GM12878 (cell line): ENCODE measurements at regions of chr13 and their contacts with region 1.

Region 1: DNA sequence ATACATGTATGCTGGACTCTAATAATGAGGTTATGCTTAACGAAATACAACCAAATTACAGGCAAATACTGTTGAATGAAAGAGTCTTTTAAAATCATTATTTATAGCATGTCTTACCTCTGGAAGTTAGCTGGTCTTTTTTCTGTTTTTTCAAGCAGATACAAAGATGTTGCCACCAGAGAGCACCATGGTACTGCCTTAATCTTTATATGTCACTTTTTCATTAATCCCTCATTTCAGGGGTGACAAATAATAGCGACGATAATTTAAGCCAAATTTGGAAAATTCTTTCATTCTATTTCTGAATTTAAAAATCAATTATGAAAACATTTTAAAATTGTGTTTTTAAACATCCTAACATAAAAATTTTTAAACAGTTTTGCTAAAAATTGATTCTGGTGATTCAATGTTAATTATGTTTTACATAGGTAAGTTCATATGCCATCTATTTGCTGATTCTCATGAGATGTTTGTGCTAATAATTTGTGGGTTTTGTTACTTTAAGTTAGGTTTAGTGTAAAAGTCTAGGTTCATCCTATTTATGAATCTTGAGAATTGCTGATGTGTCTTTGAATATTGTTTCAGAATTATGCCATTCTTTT is 379.3 kb upstream of the SGCG start:
- DNase-seq: no peak
- ATAC-seq: peak; percentile 39
- H3K4me3 ChIP-seq: no peak overlapping the region
- H3K27ac ChIP-seq: no peak overlapping the region
- H3K4me1 ChIP-seq: no peaks in the 10 kb centered on the region
- H3K27me3 ChIP-seq: no peaks in the 10 kb centered on the region
- CTCF ChIP-seq: peak; percentile 20 to 61 (median 24); a peak in 4 of 6 replicates
- EP300 ChIP-seq: no peak
- POLR2A ChIP-seq: no peak
- RAD21 ChIP-seq: peak; percentile 79

Region 2: GRCh38 chr13:21638319-21639282 is 1162.9 kb before region 1 on chr13:
- CTCF ChIA-PET with region 1: interaction called, 28 read pairs
- POLR2A ChIA-PET with region 1: no interaction called
- RAD21 ChIA-PET with region 1: interaction called, 16 read pairs
- SMC1A ChIA-PET with region 1: interaction called, 14 read pairs
- in situ Hi-C with region 1: loop called (anchors 25 kb)
- intact Hi-C with region 1: loop called (anchors 5 kb)
- DNase-seq: no peak
- ATAC-seq: peak; percentile 79
- H3K4me3 ChIP-seq: no peak overlapping the region
- H3K27ac ChIP-seq: no peak overlapping the region
- H3K4me1 ChIP-seq: no peaks in the 10 kb centered on the region
- H3K27me3 ChIP-seq: no peaks in the 10 kb centered on the region
- CTCF ChIP-seq: peak; percentile 58 to 67 (median 65)
- EP300 ChIP-seq: no peak
- POLR2A ChIP-seq: no peak
- RAD21 ChIP-seq: peak; percentile 78

Region 3: DNA sequence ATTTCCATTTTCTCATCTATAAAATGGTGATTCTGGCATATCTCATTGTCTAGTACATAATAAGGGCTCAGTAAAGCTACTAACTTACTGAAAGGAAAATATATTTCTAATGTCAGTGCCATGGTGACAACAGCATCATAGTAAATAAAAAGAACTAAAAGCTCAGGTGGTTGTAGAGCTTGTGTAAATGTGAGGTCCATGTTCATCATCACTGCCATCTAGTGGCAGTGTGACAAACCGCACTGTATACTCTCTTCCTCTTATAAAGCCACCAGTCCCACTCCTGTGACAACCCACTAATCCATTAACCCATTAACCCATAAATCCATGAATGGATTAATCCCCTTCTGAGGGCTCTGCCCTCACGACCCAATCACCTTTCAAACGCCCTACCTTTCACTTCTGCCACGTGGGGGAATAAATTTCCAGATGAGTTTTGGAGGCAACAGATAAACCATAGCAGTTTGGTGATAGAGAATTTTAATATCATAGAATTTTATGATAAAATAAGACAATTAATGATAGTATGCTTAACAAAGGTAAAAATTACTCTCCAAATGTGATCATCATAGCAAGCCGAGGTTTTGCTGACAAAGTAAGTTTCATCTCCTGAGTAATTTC is 218.8 kb after region 1 on chr13:
- CTCF ChIA-PET with region 1: interaction called, 108 read pairs
- POLR2A ChIA-PET with region 1: no interaction called
- RAD21 ChIA-PET with region 1: interaction called, 84 read pairs
- SMC1A ChIA-PET with region 1: interaction called, 47 read pairs
- in situ Hi-C with region 1: loop called (anchors 5 kb)
- intact Hi-C with region 1: loop called (anchors 1 kb)
- DNase-seq: peak; percentile 34
- ATAC-seq: peak; percentile 98
- H3K4me3 ChIP-seq: no peak overlapping the region
- H3K27ac ChIP-seq: no peak overlapping the region
- H3K4me1 ChIP-seq: no peaks in the 10 kb centered on the region
- H3K27me3 ChIP-seq: no peaks in the 10 kb centered on the region
- CTCF ChIP-seq: peak; percentile 75 to 85 (median 82)
- EP300 ChIP-seq: no peak
- POLR2A ChIP-seq: no peak
- RAD21 ChIP-seq: peak; percentile 75

Region 4: GRCh38 chr13:23087880-23088279 is 286.4 kb after region 1 on chr13:
- CTCF ChIA-PET with region 1: interaction called, 37 read pairs
- POLR2A ChIA-PET with region 1: no interaction called
- RAD21 ChIA-PET with region 1: interaction called, 7 read pairs
- SMC1A ChIA-PET with region 1: interaction called, 27 read pairs
- in situ Hi-C with region 1: no loop called
- intact Hi-C with region 1: loop called (anchors 1 kb)
- DNase-seq: no peak
- ATAC-seq: peak; percentile 85
- H3K4me3 ChIP-seq: no peak overlapping the region
- H3K27ac ChIP-seq: no peak overlapping the region
- H3K4me1 ChIP-seq: no peaks in the 10 kb centered on the region
- H3K27me3 ChIP-seq: no peaks in the 10 kb centered on the region
- CTCF ChIP-seq: peak; percentile 58 to 70 (median 60); a peak in 5 of 6 replicates
- EP300 ChIP-seq: no peak
- POLR2A ChIP-seq: no peak
- RAD21 ChIP-seq: peak; percentile 44

Region 5: GRCh38 chr13:23175920-23176319 is 374.4 kb after region 1 on chr13:
- CTCF ChIA-PET with region 1: interaction called, 8 read pairs
- POLR2A ChIA-PET with region 1: no interaction called
- RAD21 ChIA-PET with region 1: interaction called, 7 read pairs
- SMC1A ChIA-PET with region 1: no interaction called
- in situ Hi-C with region 1: no loop called
- intact Hi-C with region 1: loop called (anchors 5 kb)
- DNase-seq: no peak
- ATAC-seq: no peak
- H3K4me3 ChIP-seq: no peak overlapping the region
- H3K27ac ChIP-seq: no peak overlapping the region
- H3K4me1 ChIP-seq: no peaks in the 10 kb centered on the region
- H3K27me3 ChIP-seq: peaks cover 0 to 2% of the 10 kb centered on the region in 2 experiments; a peak in 1 of 4 replicates
- CTCF ChIP-seq: peak in 2 of 3 experiments; percentile 12 to 34; a peak in 2 of 6 replicates
- EP300 ChIP-seq: no peak
- POLR2A ChIP-seq: no peak
- RAD21 ChIP-seq: no peak